PC-3 (cell line): ENCODE measurements at regions of chr16 and their contacts with region 1.

Region 1: GRCh38 chr16:29824589-29825144 is 4.4 kb downstream of the MVP start:
- DNase-seq: peak; percentile 65
- ATAC-seq: peak; percentile 30
- H3K4me3 ChIP-seq: peak overlapping the region; percentile 34; the same call in 1 of the 2 replicates
- H3K27ac ChIP-seq: peak overlapping the region; percentile 94
- H3K4me1 ChIP-seq: peaks cover 58% of the 10 kb centered on the region
- H3K27me3 ChIP-seq: no peaks in the 10 kb centered on the region
- CTCF ChIP-seq: no peak

Region 2: GRCh38 chr16:29848420-29849297 is 24.0 kb after region 1 on chr16:
- CTCF ChIA-PET with region 1: interaction called, 9 read pairs
- POLR2A ChIA-PET with region 1: interaction called, 14 read pairs
- intact Hi-C with region 1: no loop called
- DNase-seq: peak; percentile 59
- ATAC-seq: peak; percentile 69
- H3K4me3 ChIP-seq: no peak overlapping the region
- H3K27ac ChIP-seq: no peak overlapping the region
- H3K4me1 ChIP-seq: no peaks in the 10 kb centered on the region
- H3K27me3 ChIP-seq: no peaks in the 10 kb centered on the region
- CTCF ChIP-seq: peak; percentile 69

Region 3: GRCh38 chr16:30032083-30032819 is 207.6 kb after region 1 on chr16:
- CTCF ChIA-PET with region 1: interaction called, 17 read pairs
- POLR2A ChIA-PET with region 1: no interaction called
- intact Hi-C with region 1: no loop called
- DNase-seq: peak; percentile 74
- ATAC-seq: peak; percentile 69
- H3K4me3 ChIP-seq: no peak overlapping the region
- H3K27ac ChIP-seq: no peak overlapping the region
- H3K4me1 ChIP-seq: no peaks in the 10 kb centered on the region
- H3K27me3 ChIP-seq: no peaks in the 10 kb centered on the region
- CTCF ChIP-seq: peak; percentile 89